ENCODE measurements at regions of chr16 and their contacts with region 1.

Region 1: GRCh38 chr16:68528686-68529379 is 10.3 kb upstream of the ZFP90 start:
- DNase-seq: peak; percentile 81
- H3K4me3 Mint-ChIP-seq: peak overlapping the region; percentile 85
- H3K27ac Mint-ChIP-seq: peak overlapping the region; percentile 14
- H3K4me1 Mint-ChIP-seq: peaks cover 18% of the 10 kb centered on the region
- H3K27me3 Mint-ChIP-seq: peaks cover 4% of the 10 kb centered on the region

Region 2: GRCh38 chr16:68538880-68539701 is 10.3 kb after region 1 on chr16 and contains the start of gene ZFP90:
- intact Hi-C with region 1: loop called (anchors 1 kb)
- DNase-seq: peak; percentile 84
- H3K4me3 Mint-ChIP-seq: peak within 1 kb of the TSS; percentile 95
- H3K27ac Mint-ChIP-seq: peak within 1 kb of the TSS; percentile 96
- H3K4me1 Mint-ChIP-seq: peaks cover 14% of the 10 kb centered on the region
- H3K27me3 Mint-ChIP-seq: no peaks in the 10 kb centered on the region
- total RNA-seq, gene ZFP90: 19.3 and 21.9 TPM in 2 replicates

Region 3: GRCh38 chr16:68704232-68704867 is 175.5 kb after region 1 on chr16:
- intact Hi-C with region 1: loop called (anchors 1 kb)
- DNase-seq: peak; percentile 42
- H3K4me3 Mint-ChIP-seq: no peak overlapping the region
- H3K27ac Mint-ChIP-seq: no peak overlapping the region
- H3K4me1 Mint-ChIP-seq: peaks cover 5% of the 10 kb centered on the region
- H3K27me3 Mint-ChIP-seq: no peaks in the 10 kb centered on the region

Region 4: GRCh38 chr16:68800257-68800875 is 271.5 kb after region 1 on chr16:
- intact Hi-C with region 1: loop called (anchors 1 kb)
- DNase-seq: peak; percentile 48
- H3K4me3 Mint-ChIP-seq: no peak overlapping the region
- H3K27ac Mint-ChIP-seq: no peak overlapping the region
- H3K4me1 Mint-ChIP-seq: peaks cover 4% of the 10 kb centered on the region
- H3K27me3 Mint-ChIP-seq: peaks cover 2% of the 10 kb centered on the region

Region 5: DNA sequence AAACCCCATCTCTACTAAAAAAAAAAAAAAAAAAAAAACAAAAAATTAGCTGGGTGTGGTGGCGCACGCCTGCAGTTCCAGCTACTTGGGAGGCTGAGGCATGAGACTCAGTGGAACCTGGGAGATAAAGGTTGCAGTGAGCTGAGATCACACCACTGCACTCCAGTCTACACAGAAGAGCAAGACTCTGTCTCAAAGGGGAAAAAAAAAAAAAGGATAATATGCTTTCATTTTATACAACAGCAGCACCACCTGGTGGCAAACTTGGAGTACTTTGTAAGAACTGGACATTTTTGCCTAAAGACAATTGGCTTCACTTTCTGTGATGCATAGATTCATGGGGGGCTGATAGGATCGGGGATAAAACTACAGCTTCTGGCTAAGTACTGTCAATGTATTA is 595.1 kb after region 1 on chr16:
- intact Hi-C with region 1: loop called (anchors 1 kb)
- DNase-seq: peak; percentile 50
- H3K4me3 Mint-ChIP-seq: no peak overlapping the region
- H3K27ac Mint-ChIP-seq: no peak overlapping the region
- H3K4me1 Mint-ChIP-seq: peaks cover 9% of the 10 kb centered on the region
- H3K27me3 Mint-ChIP-seq: no peaks in the 10 kb centered on the region